K562 (cell line): ENCODE measurements at regions of chr19 and their contacts with region 1.

Region 1: GRCh38 chr19:18762125-18763023 is 28.7 kb downstream of the COMP start:
- DNase-seq: no peak
- ATAC-seq: no peak
- H3K4me3 ChIP-seq: no peak overlapping the region
- H3K27ac ChIP-seq: no peak overlapping the region
- H3K4me1 ChIP-seq: peaks cover 6 to 51% of the 10 kb centered on the region in 2 experiments; a peak in 4 of 5 replicates
- H3K27me3 ChIP-seq: no peaks in the 10 kb centered on the region; a peak in 2 of 5 replicates
- CTCF ChIP-seq: no peak
- EP300 ChIP-seq: no peak
- POLR2A ChIP-seq: no peak
- RAD21 ChIP-seq: no peak

Region 2: GRCh38 chr19:18751571-18751970 is 10.8 kb before region 1 on chr19:
- CTCF ChIA-PET with region 1: no interaction called
- POLR2A ChIA-PET with region 1: interaction called, 14 read pairs
- in situ Hi-C with region 1: no loop called
- intact Hi-C with region 1: no loop called
- DNase-seq: no peak
- ATAC-seq: no peak
- H3K4me3 ChIP-seq: no peak overlapping the region
- H3K27ac ChIP-seq: no peak overlapping the region
- H3K4me1 ChIP-seq: peaks cover 4 to 23% of the 10 kb centered on the region in 2 experiments; a peak in 3 of 5 replicates
- H3K27me3 ChIP-seq: no peaks in the 10 kb centered on the region
- CTCF ChIP-seq: no peak
- EP300 ChIP-seq: no peak
- POLR2A ChIP-seq: no peak
- RAD21 ChIP-seq: no peak